Right ventricle myocardium inferior (tissue), 1 donor: ENCODE measurements at regions of chr14 and their contacts with region 1.

Region 1: DNA sequence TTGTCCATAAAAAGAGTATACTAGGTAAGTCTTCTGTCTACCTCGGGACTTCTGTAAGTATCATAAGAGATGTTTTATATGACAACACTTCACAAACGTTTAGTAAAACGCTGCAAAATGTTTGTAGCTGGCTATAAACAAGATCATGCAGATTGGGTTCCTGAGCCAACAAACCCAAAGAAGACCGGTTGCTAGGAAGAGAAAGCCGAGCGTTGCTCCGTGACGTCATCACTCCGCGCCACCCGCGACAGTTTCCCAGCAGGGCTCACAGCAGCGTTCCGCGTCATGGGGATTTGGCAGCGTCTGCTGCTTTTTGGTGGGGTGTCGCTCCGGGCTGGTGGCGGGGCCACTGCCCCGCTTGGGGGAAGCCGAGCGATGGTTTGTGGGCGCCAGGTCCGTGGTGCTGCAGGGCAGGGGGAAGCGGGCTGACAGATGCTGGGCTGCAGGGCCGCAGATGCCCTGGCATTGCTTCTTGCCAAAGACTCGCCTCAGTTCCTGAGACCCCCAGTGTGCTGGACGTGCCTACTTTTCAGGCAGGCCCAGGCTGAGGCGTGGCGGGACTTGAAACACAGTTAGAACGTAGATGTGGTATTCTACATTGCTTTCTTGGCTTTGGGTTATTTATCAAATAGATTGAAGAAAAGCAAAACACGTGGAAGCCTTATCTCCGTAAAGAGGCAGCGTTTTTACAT is at the start of gene NUBPL:
- DNase-seq: peak; percentile 98
- ATAC-seq: peak; percentile 93
- total RNA-seq, gene NUBPL: 28.6 TPM

Region 2: DNA sequence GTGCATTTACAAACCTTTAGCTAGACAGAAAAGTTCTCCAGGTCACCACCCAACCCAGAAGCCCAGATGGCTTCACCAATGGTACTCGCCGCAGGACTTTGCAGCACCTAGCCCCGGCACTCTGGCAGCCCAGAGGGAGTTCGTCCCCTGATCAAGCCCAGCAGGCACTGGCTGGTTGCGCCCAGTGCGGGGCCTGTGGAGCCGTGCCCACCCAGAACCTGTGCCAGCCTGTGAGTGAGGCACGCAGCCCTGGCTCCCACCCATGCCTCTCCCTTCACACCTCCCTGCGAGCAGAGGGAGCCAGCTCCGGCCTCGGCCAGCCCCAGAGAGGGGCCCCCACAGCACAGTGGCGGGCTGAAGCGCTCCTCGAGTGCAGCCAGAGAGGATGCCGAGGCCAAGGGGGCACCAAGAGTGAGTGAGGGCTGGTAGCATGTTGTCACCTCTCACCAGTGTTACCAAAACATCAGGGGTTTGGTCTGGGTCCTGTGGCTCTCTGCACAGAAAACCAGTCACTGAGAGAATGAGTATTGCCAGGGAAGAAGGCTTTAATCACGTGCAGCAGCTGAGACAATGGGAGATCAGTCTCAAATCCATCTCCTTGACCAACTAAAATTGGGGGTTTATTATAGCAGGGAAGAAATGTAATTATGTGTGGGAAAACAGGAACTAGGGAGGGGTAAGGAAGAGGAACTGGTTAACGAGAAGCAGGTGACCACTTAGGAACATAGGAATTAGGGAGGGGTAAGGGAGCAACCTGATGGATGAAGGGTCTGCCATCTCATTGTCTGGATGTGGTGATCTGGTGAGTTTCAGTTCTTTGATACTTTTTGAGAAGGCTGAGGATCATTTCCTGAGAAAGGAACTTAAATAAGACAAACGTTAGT is 151.2 kb after region 1 on chr14:
- intact Hi-C with region 1: no loop called
- DNase-seq: peak; percentile 68
- ATAC-seq: no peak

Region 3: DNA sequence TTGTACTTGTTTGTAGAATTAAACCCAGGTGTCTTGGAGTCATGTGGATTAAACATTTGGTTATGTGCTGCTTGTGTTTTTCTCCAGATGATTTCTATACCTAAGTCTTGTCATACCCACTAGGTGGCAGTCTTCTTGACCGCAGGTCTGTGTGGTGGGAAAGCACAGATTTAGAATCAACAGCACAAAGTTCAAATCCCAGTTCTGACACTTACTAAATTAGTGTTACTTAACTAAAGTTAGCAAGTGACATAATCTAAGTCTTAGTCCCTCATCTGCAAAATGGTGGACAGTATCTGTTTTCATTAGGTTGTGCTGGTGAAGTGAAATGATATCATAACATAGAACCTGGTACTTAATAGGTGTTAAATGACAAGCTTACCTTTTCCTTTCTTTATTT is 364.8 kb after region 1 on chr14:
- intact Hi-C with region 1: loop called (anchors 10 kb)
- DNase-seq: no peak
- ATAC-seq: no peak

Region 4: GRCh38 chr14:32202998-32203882 is 641.9 kb after region 1 on chr14 and contains the start of gene RNU6-8:
- intact Hi-C with region 1: loop called (anchors 2 kb)
- DNase-seq: peak; percentile 91
- ATAC-seq: peak; percentile 95
- total RNA-seq, gene RNU6-8: not detected